Sigmoid colon (tissue), 7 donors: ENCODE measurements at regions of chr16 and their contacts with region 1.

Region 1: DNA sequence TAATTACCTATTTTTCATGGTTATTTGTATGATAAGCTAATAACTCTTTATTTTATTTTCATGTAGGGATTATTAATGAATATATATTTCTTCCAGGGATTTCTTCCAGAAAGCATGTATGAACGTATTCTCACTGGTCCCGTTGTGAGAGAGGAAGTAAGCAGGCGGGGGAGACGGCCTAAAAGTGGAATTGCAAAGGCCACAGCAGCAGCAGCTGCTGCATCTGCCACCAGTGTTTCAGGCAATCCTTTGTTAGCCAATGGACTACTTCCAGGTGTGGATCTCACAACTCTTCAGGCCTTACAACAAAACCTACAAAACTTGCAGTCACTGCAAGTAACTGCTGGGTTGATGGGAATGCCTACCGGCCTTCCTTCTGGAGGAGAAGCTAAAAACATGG is 110.3 kb upstream of the RBL2 start:
- DNase-seq: no peak
- H3K4me3 ChIP-seq: no peak overlapping the region
- H3K27ac ChIP-seq: no peak overlapping the region
- H3K4me1 ChIP-seq: no peaks in the 10 kb centered on the region
- H3K27me3 ChIP-seq: no peaks in the 10 kb centered on the region
- CTCF ChIP-seq: no peak
- EP300 ChIP-seq: no peak
- POLR2A ChIP-seq: no peak

Region 2: GRCh38 chr16:53257001-53257400 is 66.9 kb before region 1 on chr16:
- intact Hi-C with region 1: no loop called
- DNase-seq: no peak
- H3K4me3 ChIP-seq: no peak overlapping the region
- H3K27ac ChIP-seq: no peak overlapping the region
- H3K4me1 ChIP-seq: peaks cover 0 to 4% (median 0%) of the 10 kb centered on the region in 4 donors
- H3K27me3 ChIP-seq: no peaks in the 10 kb centered on the region
- CTCF ChIP-seq: no peak
- EP300 ChIP-seq: no peak
- POLR2A ChIP-seq: no peak

Region 3: GRCh38 chr16:53285236-53285635 is 38.7 kb before region 1 on chr16:
- intact Hi-C with region 1: loop called (anchors 2 kb)
- DNase-seq: no peak
- H3K4me3 ChIP-seq: no peak overlapping the region
- H3K27ac ChIP-seq: no peak overlapping the region
- H3K4me1 ChIP-seq: peaks cover 0 to 4% (median 0%) of the 10 kb centered on the region in 4 donors
- H3K27me3 ChIP-seq: no peaks in the 10 kb centered on the region
- CTCF ChIP-seq: no peak
- EP300 ChIP-seq: no peak
- POLR2A ChIP-seq: no peak

Region 4: DNA sequence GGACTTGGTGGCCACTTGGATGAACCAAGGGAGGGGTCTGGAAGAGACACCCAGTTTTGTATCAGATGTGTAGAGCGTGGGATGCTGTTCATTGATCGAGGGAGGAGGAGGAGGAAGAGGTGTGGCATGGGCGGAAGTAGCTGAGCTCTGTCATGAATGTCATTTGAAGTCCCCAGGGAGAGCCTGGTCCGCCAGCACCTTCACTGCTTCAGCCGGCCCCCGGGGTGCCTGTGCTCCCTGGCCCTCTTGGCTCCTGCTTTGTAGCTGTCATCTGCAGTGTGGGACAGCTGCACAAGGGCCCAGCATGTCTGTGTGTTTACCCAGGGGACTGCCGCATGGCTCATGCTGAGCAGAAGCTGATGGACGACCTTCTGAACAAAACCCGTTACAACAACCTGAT is 35.0 kb after region 1 on chr16:
- intact Hi-C with region 1: no loop called
- DNase-seq: no peak
- H3K4me3 ChIP-seq: no peak overlapping the region
- H3K27ac ChIP-seq: no peak overlapping the region
- H3K4me1 ChIP-seq: no peaks in the 10 kb centered on the region
- H3K27me3 ChIP-seq: no peaks in the 10 kb centered on the region
- CTCF ChIP-seq: no peak
- EP300 ChIP-seq: no peak
- POLR2A ChIP-seq: no peak